PC-3 (cell line): ENCODE measurements at regions of chr4 and their contacts with region 1.

Region 1: GRCh38 chr4:61924131-61924530 is 724.0 kb downstream of the ADGRL3 start:
- DNase-seq: no peak
- ATAC-seq: no peak
- H3K4me3 ChIP-seq: no peak overlapping the region
- H3K27ac ChIP-seq: no peak overlapping the region
- H3K4me1 ChIP-seq: peaks cover 36% of the 10 kb centered on the region
- H3K27me3 ChIP-seq: no peaks in the 10 kb centered on the region
- CTCF ChIP-seq: peak; percentile 35; the same call in 1 of the 2 replicates

Region 2: DNA sequence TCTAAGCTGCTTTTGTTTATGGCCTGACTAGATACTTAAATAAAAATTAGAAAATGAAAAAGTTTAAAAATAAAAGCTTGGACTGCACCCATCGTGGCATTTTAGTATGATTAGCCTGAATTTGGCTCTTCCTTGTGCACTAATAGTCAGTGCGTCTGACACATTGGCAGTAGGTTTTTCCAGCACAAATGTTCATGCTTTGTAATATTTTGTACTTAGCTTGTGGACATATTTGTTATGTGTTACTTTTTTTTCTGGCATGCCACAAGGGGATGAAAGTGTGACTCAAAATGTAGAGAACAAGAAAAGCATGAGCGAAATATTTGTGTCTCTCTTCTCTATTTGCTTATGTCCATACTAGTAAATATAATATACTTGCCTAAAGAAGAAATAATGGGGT is 364.7 kb before region 1 on chr4:
- CTCF ChIA-PET with region 1: interaction called, 12 read pairs
- POLR2A ChIA-PET with region 1: no interaction called
- intact Hi-C with region 1: no loop called
- DNase-seq: no peak
- ATAC-seq: no peak
- H3K4me3 ChIP-seq: no peak overlapping the region
- H3K27ac ChIP-seq: no peak overlapping the region
- H3K4me1 ChIP-seq: peaks cover 16% of the 10 kb centered on the region
- H3K27me3 ChIP-seq: no peaks in the 10 kb centered on the region
- CTCF ChIP-seq: no peak

Region 3: GRCh38 chr4:61741327-61742096 is 182.6 kb before region 1 on chr4:
- CTCF ChIA-PET with region 1: no interaction called
- POLR2A ChIA-PET with region 1: no interaction called
- intact Hi-C with region 1: loop called (anchors 10 kb)
- DNase-seq: peak; percentile 75
- ATAC-seq: peak; percentile 81
- H3K4me3 ChIP-seq: no peak overlapping the region
- H3K27ac ChIP-seq: no peak overlapping the region
- H3K4me1 ChIP-seq: no peaks in the 10 kb centered on the region
- H3K27me3 ChIP-seq: no peaks in the 10 kb centered on the region
- CTCF ChIP-seq: peak; percentile 93

Region 4: GRCh38 chr4:61783050-61783449 is 141.1 kb before region 1 on chr4:
- CTCF ChIA-PET with region 1: interaction called, 3 read pairs
- POLR2A ChIA-PET with region 1: no interaction called
- intact Hi-C with region 1: loop called (anchors 5 kb)
- DNase-seq: peak; percentile 60
- ATAC-seq: peak; percentile 45
- H3K4me3 ChIP-seq: no peak overlapping the region
- H3K27ac ChIP-seq: no peak overlapping the region
- H3K4me1 ChIP-seq: peaks cover 8% of the 10 kb centered on the region; the same call in 1 of the 2 replicates
- H3K27me3 ChIP-seq: no peaks in the 10 kb centered on the region
- CTCF ChIP-seq: no peak

Region 5: GRCh38 chr4:61837395-61837794 is 86.7 kb before region 1 on chr4:
- CTCF ChIA-PET with region 1: no interaction called
- POLR2A ChIA-PET with region 1: no interaction called
- intact Hi-C with region 1: loop called (anchors 5 kb)
- DNase-seq: peak; percentile 12
- ATAC-seq: no peak
- H3K4me3 ChIP-seq: no peak overlapping the region
- H3K27ac ChIP-seq: no peak overlapping the region
- H3K4me1 ChIP-seq: peaks cover 6% of the 10 kb centered on the region
- H3K27me3 ChIP-seq: no peaks in the 10 kb centered on the region
- CTCF ChIP-seq: peak; percentile 48

Region 6: DNA sequence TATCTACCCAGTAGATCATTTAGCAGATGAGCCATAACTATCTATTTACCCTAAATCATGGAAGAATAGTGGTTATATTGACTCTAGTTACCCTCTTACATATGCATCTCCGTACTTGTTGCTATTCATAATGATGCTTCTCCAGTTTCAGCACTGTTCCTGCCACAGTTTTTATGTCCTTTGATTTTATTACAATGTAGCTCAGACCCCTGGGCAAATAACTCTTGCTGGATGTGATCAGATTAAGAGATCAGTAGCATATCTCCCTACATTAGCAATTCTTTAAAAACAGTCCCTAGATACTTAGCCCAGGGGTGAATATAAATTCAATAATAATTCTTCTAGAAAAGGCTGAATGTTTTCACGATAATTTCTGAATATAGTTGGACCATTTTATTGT is 27.5 kb before region 1 on chr4:
- CTCF ChIA-PET with region 1: no interaction called
- POLR2A ChIA-PET with region 1: no interaction called
- intact Hi-C with region 1: no loop called
- DNase-seq: no peak
- ATAC-seq: no peak
- H3K4me3 ChIP-seq: no peak overlapping the region
- H3K27ac ChIP-seq: no peak overlapping the region
- H3K4me1 ChIP-seq: no peaks in the 10 kb centered on the region
- H3K27me3 ChIP-seq: no peaks in the 10 kb centered on the region
- CTCF ChIP-seq: no peak

Region 7: DNA sequence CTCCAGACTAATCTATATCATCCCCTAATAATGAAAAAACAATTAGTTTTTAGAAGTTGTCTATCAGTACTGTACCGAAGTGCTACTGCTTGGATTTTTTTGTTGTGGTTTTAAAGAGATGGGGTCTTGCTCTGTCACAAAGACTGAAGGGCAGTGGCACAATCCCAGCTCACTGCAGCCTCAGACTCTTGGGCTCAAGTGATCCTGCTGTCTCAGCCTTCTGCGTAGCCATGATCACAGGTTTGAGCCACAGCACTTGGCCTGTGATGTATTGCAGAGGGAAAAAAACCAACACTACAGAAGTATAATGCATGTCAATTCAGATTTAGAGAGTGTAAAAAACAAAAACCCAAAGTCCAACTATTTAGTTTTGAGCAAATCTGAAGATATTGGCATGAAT is 151.0 kb after region 1 on chr4:
- CTCF ChIA-PET with region 1: no interaction called
- POLR2A ChIA-PET with region 1: no interaction called
- intact Hi-C with region 1: no loop called
- DNase-seq: no peak
- ATAC-seq: no peak
- H3K4me3 ChIP-seq: no peak overlapping the region
- H3K27ac ChIP-seq: no peak overlapping the region
- H3K4me1 ChIP-seq: no peaks in the 10 kb centered on the region
- H3K27me3 ChIP-seq: no peaks in the 10 kb centered on the region
- CTCF ChIP-seq: no peak